Activated CD8-positive, alpha-beta T cell treated with anti-CD3 and anti-CD28 coated beads for 36 hours (primary cell): ENCODE measurements at regions of chr1 and their contacts with region 1.

Region 1: DNA sequence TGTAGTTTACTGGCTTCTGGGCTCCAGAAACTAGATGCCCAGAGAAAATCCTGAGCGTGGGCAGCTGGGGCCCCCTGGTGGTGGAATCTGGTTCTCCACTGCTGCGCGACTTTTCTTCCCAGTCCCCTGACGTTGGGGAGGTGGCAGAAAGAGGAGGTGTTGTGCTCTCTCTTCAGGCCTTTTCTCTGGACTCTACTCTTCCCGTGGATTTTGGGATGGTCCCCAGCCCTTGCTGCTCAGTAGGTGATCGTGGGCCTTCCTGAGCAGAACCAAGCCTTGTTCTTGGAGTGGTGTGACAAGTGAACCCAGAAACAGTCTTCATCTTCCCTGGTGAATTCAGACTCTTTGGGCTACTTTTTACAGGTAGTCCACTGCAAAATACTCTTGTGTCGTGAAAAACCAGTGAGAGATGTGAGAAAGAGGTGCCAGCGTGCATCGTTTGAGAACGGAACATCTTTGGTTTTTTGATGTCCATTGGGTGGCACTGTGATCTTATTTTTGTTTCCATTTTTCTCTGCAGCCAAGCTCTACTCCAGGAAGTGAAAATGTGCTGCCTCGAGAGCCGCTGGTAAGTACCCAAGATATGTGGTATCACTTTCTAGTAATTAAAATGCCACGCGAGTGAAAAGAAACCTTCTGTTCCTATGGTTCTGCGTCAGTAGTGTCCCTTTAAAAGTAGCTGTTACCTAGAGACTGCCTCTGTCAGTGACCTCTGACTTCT is 20.2 kb downstream of the PEX14 start:
- DNase-seq: peak; percentile 91
- ATAC-seq: peak; percentile 91
- H3K4me3 Mint-ChIP-seq: peak overlapping the region; percentile 68
- H3K27ac Mint-ChIP-seq: peak overlapping the region; percentile 92
- H3K4me1 Mint-ChIP-seq: peaks cover 48% of the 10 kb centered on the region
- H3K27me3 Mint-ChIP-seq: no peaks in the 10 kb centered on the region
- CTCF ChIP-seq: peak; percentile 99

Region 2: GRCh38 chr1:10128101-10128765 is 366.7 kb before region 1 on chr1:
- CTCF ChIA-PET with region 1: no interaction called
- POLR2A ChIA-PET with region 1: no interaction called
- intact Hi-C with region 1: no loop called
- DNase-seq: no peak
- ATAC-seq: no peak
- H3K4me3 Mint-ChIP-seq: no peak overlapping the region
- H3K27ac Mint-ChIP-seq: no peak overlapping the region
- H3K4me1 Mint-ChIP-seq: no peaks in the 10 kb centered on the region
- H3K27me3 Mint-ChIP-seq: no peaks in the 10 kb centered on the region
- CTCF ChIP-seq: no peak

Region 3: GRCh38 chr1:10459181-10459580 is 35.7 kb before region 1 on chr1:
- CTCF ChIA-PET with region 1: interaction called, 11 read pairs
- POLR2A ChIA-PET with region 1: no interaction called
- intact Hi-C with region 1: no loop called
- DNase-seq: no peak
- ATAC-seq: no peak
- H3K4me3 Mint-ChIP-seq: no peak overlapping the region
- H3K27ac Mint-ChIP-seq: no peak overlapping the region
- H3K4me1 Mint-ChIP-seq: peaks cover 2% of the 10 kb centered on the region
- H3K27me3 Mint-ChIP-seq: no peaks in the 10 kb centered on the region
- CTCF ChIP-seq: no peak

Region 4: DNA sequence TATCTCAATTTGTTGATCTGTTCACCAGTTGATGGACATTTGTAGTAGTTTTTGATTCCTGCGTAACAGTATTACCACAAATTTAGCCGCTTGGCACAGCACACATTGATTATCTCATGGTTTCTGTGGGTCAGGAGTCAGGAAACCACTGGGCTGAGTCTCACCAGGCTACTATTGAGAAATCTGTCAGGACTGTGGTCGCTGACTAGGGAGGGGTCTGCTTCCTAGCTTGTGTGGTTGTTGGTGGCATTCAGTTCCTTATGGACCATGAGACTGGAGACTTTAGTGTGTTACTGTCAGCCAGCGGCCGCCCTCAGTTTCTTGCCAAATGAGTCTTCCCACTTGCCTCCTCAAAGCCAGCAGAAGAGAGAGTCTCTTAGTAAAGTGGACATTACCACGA is 10.4 kb before region 1 on chr1:
- CTCF ChIA-PET with region 1: interaction called, 32 read pairs
- POLR2A ChIA-PET with region 1: no interaction called
- intact Hi-C with region 1: no loop called
- DNase-seq: no peak
- ATAC-seq: no peak
- H3K4me3 Mint-ChIP-seq: no peak overlapping the region
- H3K27ac Mint-ChIP-seq: no peak overlapping the region
- H3K4me1 Mint-ChIP-seq: peaks cover 16% of the 10 kb centered on the region
- H3K27me3 Mint-ChIP-seq: no peaks in the 10 kb centered on the region
- CTCF ChIP-seq: no peak

Region 5: DNA sequence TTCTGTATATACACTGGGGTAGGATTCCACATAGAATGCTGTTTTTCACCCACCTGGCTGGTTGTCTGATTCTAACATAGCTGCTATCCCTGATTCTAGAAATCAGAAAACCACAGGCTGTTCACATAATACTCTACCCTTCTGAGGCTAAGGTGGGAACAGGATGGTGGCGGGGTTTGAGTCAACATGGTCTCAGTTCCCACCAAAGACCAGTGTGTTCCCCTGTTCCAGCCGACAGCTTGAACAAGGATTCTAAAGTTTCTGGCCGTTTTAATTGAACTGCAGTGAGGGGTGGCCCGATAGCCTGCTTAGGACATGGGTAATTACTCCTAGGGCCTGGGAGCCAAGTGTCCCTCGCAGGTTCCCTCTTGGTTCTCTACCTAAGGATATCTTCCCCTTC is 18.3 kb after region 1 on chr1:
- CTCF ChIA-PET with region 1: interaction called, 202 read pairs
- POLR2A ChIA-PET with region 1: interaction called, 15 read pairs
- intact Hi-C with region 1: no loop called
- DNase-seq: peak; percentile 50
- ATAC-seq: no peak
- H3K4me3 Mint-ChIP-seq: no peak overlapping the region
- H3K27ac Mint-ChIP-seq: peak overlapping the region; percentile 48
- H3K4me1 Mint-ChIP-seq: peaks cover 79% of the 10 kb centered on the region
- H3K27me3 Mint-ChIP-seq: no peaks in the 10 kb centered on the region
- CTCF ChIP-seq: no peak

Region 6: DNA sequence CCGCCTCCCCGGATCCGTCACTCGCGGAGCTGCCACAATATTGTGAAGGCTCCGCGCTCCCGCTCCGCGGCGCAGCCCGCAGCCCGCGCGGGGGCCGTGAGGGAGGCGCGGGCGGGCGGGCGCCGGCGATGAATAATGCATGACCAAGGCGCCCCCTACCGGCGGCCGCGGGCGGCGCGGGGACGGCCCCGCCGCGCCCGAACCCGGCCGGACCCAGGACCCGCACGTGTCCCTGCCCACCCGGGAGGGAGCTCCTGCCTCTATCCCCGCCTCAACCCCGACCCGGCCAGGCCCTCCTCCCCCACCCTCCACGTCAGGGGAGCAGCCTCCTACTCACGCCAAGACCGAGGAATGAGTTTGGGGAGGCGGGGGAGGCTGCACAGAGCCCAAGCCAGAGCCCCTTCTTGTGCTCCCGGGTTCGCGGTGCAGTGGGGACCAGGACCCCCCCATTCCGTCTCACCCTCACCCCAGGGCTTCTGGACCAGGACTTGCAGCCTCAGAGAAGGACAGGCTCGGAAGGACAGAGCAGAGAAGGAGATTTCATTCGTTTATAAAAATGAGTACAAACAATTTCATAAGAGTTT is 372.3 kb after region 1 on chr1:
- CTCF ChIA-PET with region 1: interaction called, 14 read pairs
- POLR2A ChIA-PET with region 1: no interaction called
- intact Hi-C with region 1: loop called (anchors 5 kb)
- DNase-seq: peak; percentile 68
- ATAC-seq: peak; percentile 82
- H3K4me3 Mint-ChIP-seq: no peak overlapping the region
- H3K27ac Mint-ChIP-seq: no peak overlapping the region
- H3K4me1 Mint-ChIP-seq: peaks cover 9% of the 10 kb centered on the region
- H3K27me3 Mint-ChIP-seq: peaks cover 56% of the 10 kb centered on the region
- CTCF ChIP-seq: peak; percentile 82